WTC11 (cell line): ENCODE measurements at regions of chr1 and their contacts with region 1.

Region 1: DNA sequence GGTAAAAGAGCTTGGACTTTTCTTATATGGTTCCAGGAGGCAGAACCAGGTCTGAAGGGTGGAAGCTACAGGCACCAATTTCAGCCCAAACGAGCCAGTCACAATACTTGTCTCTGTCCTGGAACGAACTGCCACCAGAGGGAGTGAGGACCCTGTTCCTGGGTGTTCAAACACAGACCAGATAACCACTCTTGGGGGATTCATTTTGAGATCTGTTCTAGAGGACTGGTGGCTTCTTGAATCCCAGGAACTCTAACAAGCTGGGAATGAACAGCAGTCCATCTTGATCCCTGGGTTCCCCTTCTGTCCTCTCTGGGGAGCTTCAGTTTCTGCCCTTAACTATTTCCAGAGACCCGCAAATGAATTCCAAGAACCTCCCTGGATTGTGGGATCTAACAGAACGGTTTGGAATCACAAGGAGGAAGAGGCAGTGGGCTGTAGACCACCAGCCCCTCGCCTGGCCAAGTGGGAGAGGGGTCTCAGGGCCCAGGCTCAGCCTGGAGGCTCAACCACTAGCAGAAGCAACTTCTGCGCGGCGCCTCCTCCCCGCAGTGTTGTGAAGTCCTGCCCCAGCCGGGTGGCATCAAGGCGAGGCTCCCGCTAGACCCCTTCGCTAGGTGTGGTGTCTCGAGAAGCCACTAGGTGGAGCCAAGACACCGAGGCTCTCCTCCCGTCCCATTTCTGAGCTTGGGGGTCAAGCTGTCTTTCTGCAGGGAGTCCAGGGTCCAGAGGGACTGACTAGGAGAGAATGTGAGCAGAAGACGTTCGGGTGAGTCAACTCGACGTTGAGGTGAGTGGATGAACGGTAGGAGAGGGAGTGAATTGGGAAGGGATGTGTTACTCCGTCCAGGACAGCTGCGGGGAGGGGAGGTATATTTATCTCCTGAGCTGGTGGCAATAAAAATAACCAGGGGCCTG is 12.1 kb upstream of the NES start:
- DNase-seq: peak; percentile 90
- ATAC-seq: peak; percentile 51
- H3K4me3 Mint-ChIP-seq: peak overlapping the region; percentile 74
- H3K27ac Mint-ChIP-seq: peak overlapping the region; percentile 25; the same call in 1 of the 2 replicates
- H3K4me1 Mint-ChIP-seq: peaks cover 57% of the 10 kb centered on the region
- H3K27me3 Mint-ChIP-seq: peaks cover 7% of the 10 kb centered on the region; the same call in 1 of the 2 replicates
- CTCF ChIP-seq: peak; percentile 87

Region 2: GRCh38 chr1:156659994-156660751 is 29.1 kb before region 1 on chr1:
- CTCF ChIA-PET with region 1: interaction called, 437 read pairs
- POLR2A ChIA-PET with region 1: interaction called, 4 read pairs
- DNase-seq: peak; percentile 99
- ATAC-seq: peak; percentile 63
- H3K4me3 Mint-ChIP-seq: peak overlapping the region; percentile 35; the same call in 1 of the 2 replicates
- H3K27ac Mint-ChIP-seq: peak overlapping the region; percentile 99
- H3K4me1 Mint-ChIP-seq: peaks cover 83% of the 10 kb centered on the region
- H3K27me3 Mint-ChIP-seq: peaks cover 47% of the 10 kb centered on the region
- CTCF ChIP-seq: peak; percentile 95

Region 3: GRCh38 chr1:156728597-156729462 is 39.5 kb after region 1 on chr1 and contains the start of gene ISG20L2:
- CTCF ChIA-PET with region 1: interaction called, 682 read pairs
- POLR2A ChIA-PET with region 1: interaction called, 57 read pairs
- DNase-seq: peak; percentile 96
- ATAC-seq: peak; percentile 90
- H3K4me3 Mint-ChIP-seq: no peak within 1 kb of the TSS
- H3K27ac Mint-ChIP-seq: peak within 1 kb of the TSS; percentile 99
- H3K4me1 Mint-ChIP-seq: peaks cover 14% of the 10 kb centered on the region
- H3K27me3 Mint-ChIP-seq: no peaks in the 10 kb centered on the region
- CTCF ChIP-seq: no peak
- total RNA-seq, gene ISG20L2: 37.2 to 43.8 TPM (median 42.2 TPM) in 3 replicates

Region 4: DNA sequence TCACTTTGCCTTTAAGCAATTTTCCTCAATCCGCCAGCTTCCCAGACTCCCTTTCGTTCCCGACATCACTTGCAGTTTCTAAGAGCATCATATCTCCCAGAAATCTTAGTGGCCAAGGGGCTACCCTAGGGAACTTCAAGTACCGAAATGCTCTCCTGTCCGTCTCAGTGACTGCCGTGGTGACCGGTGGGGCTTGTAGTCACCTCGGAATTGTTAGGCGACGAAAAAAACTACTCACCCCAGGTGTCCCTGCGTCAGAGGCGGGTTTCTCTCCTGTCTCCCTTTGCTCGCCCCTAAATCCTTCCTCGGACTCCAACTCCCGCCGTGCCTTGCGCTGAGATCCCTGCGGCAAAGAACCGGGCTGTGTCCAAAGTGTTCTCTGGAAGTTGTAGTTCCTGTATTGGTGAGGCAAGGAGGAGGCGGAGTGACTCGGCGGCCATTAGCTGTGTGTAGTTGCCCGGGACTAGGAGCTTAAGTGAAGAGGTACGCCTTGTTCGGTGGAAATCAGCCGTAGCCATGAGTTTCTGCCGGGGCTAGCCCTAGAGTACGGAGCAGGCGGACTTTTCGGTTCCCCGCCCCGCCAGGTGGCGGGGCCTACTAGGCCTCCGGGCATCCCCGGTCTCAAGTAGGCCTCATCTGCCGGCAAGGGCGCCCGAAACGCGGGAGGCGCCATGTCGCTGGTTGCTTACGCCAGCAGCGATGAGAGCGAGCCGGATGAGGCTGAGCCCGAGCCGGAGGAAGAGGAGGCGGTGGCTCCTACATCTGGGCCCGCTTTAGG is 78.0 kb after region 1 on chr1 and contains the start of gene PRCC:
- CTCF ChIA-PET with region 1: interaction called, 17 read pairs
- POLR2A ChIA-PET with region 1: interaction called, 3 read pairs
- DNase-seq: peak; percentile 98
- ATAC-seq: peak; percentile 96
- H3K4me3 Mint-ChIP-seq: no peak within 1 kb of the TSS
- H3K27ac Mint-ChIP-seq: peak within 1 kb of the TSS; percentile 28; the same call in 1 of the 2 replicates
- H3K4me1 Mint-ChIP-seq: peaks cover 34% of the 10 kb centered on the region
- H3K27me3 Mint-ChIP-seq: no peaks in the 10 kb centered on the region
- CTCF ChIP-seq: no peak
- total RNA-seq, gene PRCC: 97.4 to 98.5 TPM (median 98.0 TPM) in 3 replicates

Region 5: GRCh38 chr1:156852418-156852874 is 163.2 kb after region 1 on chr1:
- CTCF ChIA-PET with region 1: interaction called, 10 read pairs
- POLR2A ChIA-PET with region 1: no interaction called
- DNase-seq: no peak
- ATAC-seq: no peak
- H3K4me3 Mint-ChIP-seq: no peak overlapping the region
- H3K27ac Mint-ChIP-seq: no peak overlapping the region
- H3K4me1 Mint-ChIP-seq: peaks cover 10% of the 10 kb centered on the region
- H3K27me3 Mint-ChIP-seq: peaks cover 89% of the 10 kb centered on the region
- CTCF ChIP-seq: no peak

Region 6: DNA sequence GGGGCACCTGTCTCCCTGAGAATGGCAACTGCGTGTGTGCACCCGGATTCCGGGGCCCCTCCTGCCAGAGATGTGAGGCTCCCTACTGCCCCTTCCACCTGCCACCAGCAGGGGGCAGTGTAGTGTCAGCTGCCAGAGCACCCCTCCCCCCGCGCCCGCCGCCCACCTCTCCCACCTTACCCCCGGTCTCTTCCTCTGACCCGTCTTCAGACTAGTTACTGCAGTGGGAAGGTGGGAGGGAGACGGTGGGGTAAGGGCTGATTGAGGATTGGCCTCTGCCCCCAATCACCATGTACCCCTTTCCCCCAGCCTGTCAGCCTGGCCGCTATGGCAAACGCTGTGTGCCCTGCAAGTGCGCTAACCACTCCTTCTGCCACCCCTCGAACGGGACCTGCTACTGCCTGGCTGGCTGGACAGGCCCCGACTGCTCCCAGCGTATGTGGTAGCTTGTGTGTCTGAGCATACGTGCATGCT is 221.1 kb after region 1 on chr1:
- CTCF ChIA-PET with region 1: interaction called, 11 read pairs
- POLR2A ChIA-PET with region 1: no interaction called
- DNase-seq: peak; percentile 82
- ATAC-seq: peak; percentile 71
- H3K4me3 Mint-ChIP-seq: peak overlapping the region; percentile 67
- H3K27ac Mint-ChIP-seq: no peak overlapping the region
- H3K4me1 Mint-ChIP-seq: peaks cover 17% of the 10 kb centered on the region
- H3K27me3 Mint-ChIP-seq: peaks cover 17% of the 10 kb centered on the region
- CTCF ChIP-seq: peak; percentile 98

Region 7: DNA sequence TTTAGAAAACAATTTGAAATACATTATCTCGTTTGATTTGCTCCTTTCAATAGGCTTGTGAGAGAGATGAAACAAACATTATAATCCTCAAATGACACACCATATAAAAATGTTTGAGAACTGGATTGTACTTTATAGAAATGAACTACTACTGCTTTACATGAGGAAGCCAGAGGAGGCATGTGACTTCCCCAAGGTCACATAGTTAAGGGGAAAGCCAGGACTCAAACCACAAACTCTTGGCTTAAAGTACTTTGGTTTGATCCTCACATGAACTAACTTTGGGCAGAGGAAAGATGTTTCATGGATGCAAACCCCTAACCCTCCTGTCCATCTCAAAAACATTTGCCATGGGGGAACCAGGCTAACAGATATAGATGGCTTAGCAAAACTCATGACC is 351.5 kb after region 1 on chr1:
- CTCF ChIA-PET with region 1: no interaction called
- POLR2A ChIA-PET with region 1: no interaction called
- DNase-seq: no peak
- ATAC-seq: no peak
- H3K4me3 Mint-ChIP-seq: no peak overlapping the region
- H3K27ac Mint-ChIP-seq: no peak overlapping the region
- H3K4me1 Mint-ChIP-seq: peaks cover 46% of the 10 kb centered on the region
- H3K27me3 Mint-ChIP-seq: no peaks in the 10 kb centered on the region
- CTCF ChIP-seq: no peak